Ascending aorta (tissue), 2 donors: ENCODE measurements at regions of chrX and their contacts with region 1.

Region 1: DNA sequence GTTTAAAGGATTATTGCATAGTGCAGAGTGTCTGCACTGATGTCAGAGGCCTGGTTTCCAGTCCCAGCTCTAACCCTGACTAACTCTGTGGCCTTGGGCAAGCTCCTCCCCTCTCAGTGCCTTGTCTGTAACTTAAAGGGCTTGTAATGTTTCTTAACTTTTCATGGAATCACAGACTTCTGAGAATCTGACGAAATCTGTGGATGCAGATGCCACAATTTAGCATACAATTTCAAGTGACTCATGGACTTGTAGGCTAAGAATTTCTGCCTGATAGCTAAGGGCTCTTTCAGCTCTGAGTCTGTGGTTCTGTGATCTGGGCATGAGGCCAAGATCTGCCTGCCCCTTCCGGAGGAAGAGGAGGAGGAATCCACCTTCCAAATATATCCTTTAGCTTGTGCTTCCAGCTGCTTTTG is 236.9 kb downstream of the AR start:
- DNase-seq: peak; percentile 29 to 88
- H3K4me3 ChIP-seq: no peak overlapping the region
- H3K27ac ChIP-seq: peak overlapping the region; percentile 53 to 75
- H3K4me1 ChIP-seq: peaks cover 0 to 14% of the 10 kb centered on the region in 2 donors
- H3K27me3 ChIP-seq: no peaks in the 10 kb centered on the region
- CTCF ChIP-seq: no peak

Region 2: DNA sequence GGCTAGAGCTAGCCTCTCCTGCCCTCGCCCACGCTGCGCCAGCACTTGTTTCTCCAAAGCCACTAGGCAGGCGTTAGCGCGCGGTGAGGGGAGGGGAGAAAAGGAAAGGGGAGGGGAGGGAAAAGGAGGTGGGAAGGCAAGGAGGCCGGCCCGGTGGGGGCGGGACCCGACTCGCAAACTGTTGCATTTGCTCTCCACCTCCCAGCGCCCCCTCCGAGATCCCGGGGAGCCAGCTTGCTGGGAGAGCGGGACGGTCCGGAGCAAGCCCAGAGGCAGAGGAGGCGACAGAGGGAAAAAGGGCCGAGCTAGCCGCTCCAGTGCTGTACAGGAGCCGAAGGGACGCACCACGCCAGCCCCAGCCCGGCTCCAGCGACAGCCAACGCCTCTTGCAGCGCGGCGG is 236.9 kb before region 1 on chrX and contains the start of gene AR:
- intact Hi-C with region 1: loop called (anchors 10 kb)
- DNase-seq: peak; percentile 17 to 83
- H3K4me3 ChIP-seq: peak within 1 kb of the TSS; percentile 42 to 68
- H3K27ac ChIP-seq: peak within 1 kb of the TSS; percentile 70 to 79
- H3K4me1 ChIP-seq: no peaks in the 10 kb centered on the region
- H3K27me3 ChIP-seq: no peaks in the 10 kb centered on the region
- CTCF ChIP-seq: no peak
- total RNA-seq, gene AR: 16.3 TPM